Dendritic cell treated with granulocyte-macrophage colony-stimulating factor and Interleukin-4, amounts not matched to agents 40 ng/mL and 50 ng/mL, for 4 days (primary cell): ENCODE measurements at regions of chr10 and their contacts with region 1.

Region 1: DNA sequence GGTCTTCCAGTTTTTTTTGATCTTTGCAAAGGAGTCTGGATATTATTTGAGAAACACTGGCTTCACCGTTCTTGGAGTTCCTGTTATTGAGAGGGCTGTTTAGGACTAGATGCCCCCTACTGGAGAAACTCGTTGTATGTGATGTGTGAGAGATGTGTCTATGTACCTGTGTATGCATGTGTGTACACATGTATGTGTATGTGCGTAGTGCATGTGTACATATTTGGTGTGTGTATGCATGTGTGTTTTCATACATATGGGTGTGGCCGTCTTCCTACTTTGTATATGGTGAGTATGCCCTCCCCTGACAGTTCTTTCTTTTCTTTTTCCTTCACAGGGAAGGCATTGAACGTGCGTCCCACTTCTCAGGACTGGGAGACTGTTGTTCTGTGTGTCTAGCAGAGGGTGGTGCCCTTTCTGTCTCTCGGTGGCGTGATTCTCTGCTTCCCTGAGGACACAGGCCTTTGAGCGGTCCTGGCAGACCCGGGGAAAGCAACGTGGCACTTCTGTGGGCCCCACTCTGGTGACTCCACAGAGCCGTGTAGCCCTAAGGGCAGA is 3.0 kb upstream of the CALHM3 start:
- H3K4me3 Mint-ChIP-seq: no peak overlapping the region
- H3K27ac Mint-ChIP-seq: no peak overlapping the region
- H3K4me1 Mint-ChIP-seq: peaks cover 28% of the 10 kb centered on the region
- H3K27me3 Mint-ChIP-seq: peaks cover 3% of the 10 kb centered on the region

Region 2: GRCh38 chr10:103416436-103417147 is 65.5 kb before region 1 on chr10:
- intact Hi-C with region 1: loop called (anchors 1 kb)
- H3K4me3 Mint-ChIP-seq: no peak overlapping the region
- H3K27ac Mint-ChIP-seq: no peak overlapping the region
- H3K4me1 Mint-ChIP-seq: no peaks in the 10 kb centered on the region
- H3K27me3 Mint-ChIP-seq: no peaks in the 10 kb centered on the region

Region 3: DNA sequence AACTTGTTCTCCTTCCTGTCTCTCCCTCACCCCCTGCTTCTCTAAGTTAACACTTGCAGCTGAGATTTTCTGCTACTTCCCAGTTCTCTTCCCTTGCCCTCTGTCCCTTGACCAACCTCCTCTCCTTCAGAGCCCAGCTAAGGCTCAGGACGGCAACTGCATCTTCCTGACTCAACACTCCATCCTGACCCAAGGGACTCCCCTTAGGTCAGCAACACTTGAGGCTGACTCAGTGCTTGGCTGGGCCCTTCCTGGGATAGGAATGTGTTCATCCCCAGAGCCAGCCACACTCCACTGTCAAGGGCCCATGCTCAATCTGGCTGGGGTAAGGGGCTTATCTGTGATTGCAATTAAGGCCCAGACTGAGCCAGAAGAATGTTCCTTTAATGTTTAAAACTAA is 33.3 kb before region 1 on chr10:
- intact Hi-C with region 1: loop called (anchors 5 kb)
- H3K4me3 Mint-ChIP-seq: peak overlapping the region; percentile 60
- H3K27ac Mint-ChIP-seq: peak overlapping the region; percentile 88
- H3K4me1 Mint-ChIP-seq: peaks cover 84% of the 10 kb centered on the region
- H3K27me3 Mint-ChIP-seq: no peaks in the 10 kb centered on the region